CD4-positive, alpha-beta memory T cell (primary cell): ENCODE measurements at regions of chr19 and their contacts with region 1.

Region 1: DNA sequence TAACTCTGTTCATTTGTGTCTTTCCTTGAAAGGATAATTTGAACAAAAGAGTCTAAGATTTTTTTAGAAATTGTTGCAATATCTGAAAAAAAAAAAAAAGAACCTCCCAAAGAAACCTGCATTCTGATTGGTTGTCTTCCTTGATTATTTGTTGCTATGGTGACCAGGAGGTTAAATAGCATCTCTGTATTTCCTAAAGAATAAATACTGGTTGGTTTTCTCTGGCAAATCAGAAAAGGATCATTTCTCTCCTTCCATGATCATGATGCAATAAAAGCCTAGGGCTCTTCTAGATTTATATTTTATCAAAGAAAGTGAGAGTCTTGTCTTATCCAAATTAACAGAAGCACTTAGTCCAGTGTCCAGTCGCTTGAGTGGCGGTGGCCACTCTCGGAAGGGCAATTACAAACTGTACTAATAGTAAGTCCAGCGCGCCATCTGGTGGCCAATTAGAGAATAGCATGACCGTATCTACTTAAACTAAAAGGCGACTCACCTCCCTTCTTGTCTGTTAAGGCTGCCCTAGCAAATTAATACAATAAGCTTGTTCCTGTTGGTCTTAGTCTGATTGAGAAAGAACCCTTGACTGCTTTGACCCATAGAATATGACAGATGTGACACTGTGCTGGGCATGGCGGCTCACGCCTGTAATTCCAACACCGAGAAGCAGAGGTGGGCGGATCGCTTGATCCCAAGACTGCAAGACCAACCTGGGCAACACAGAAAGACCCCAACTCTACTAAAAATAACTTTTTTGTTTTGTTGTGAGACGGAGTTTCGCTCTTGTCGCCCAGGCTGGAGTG is 47.0 kb upstream of the PNMA8B start:
- DNase-seq: peak; percentile 62 to 81 (median 66)
- H3K4me3 ChIP-seq: no peak overlapping the region
- H3K4me3 Mint-ChIP-seq: no peak overlapping the region
- H3K27ac ChIP-seq: no peak overlapping the region
- H3K27ac Mint-ChIP-seq: peak overlapping the region in 1 of 7 donors; percentile 16
- H3K4me1 ChIP-seq: peaks cover 3% of the 10 kb centered on the region
- H3K4me1 Mint-ChIP-seq: peaks cover 1 to 6% (median 5%) of the 10 kb centered on the region in 4 donors
- H3K27me3 ChIP-seq: no peaks in the 10 kb centered on the region
- H3K27me3 Mint-ChIP-seq: peaks cover 0 to under 1% of the 10 kb centered on the region in 2 donors

Region 2: DNA sequence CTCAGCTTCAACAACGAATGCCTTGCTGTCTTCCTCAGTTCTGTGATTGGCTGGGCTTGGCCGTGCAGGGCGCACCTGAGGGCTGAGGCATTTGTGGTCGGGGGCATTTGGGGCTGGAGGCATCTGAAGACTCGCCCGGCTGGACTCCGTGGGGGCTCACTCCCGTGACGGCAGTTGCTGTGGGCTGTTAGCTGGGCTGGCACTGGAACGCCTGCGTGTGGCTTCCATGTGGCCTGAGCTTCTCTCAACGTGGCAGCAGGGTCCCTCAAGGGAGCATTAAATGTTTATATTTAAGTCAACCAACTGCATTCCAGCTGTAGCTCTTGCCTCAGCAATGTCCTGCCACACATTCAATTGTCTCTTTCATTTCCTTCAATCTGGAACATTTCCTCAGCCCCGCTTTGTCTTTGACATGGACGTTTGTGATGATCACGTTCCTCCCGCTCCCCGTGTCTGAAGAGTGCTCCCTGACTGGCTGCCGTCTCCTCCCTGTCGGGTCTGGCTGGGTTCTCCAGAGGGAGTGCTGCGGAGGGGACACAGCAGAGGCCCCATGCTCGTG is 150.3 kb before region 1 on chr19:
- CTCF ChIA-PET with region 1: interaction called, 3 read pairs
- POLR2A ChIA-PET with region 1: interaction called, 4 read pairs
- intact Hi-C with region 1: loop called (anchors 2 kb)
- DNase-seq: no peak
- H3K4me3 ChIP-seq: no peak overlapping the region
- H3K4me3 Mint-ChIP-seq: no peak overlapping the region
- H3K27ac ChIP-seq: no peak overlapping the region
- H3K27ac Mint-ChIP-seq: peak overlapping the region in 2 of 7 donors; percentile 46 to 64
- H3K4me1 ChIP-seq: no peaks in the 10 kb centered on the region
- H3K4me1 Mint-ChIP-seq: peaks cover 3 to 10% (median 4%) of the 10 kb centered on the region in 4 donors
- H3K27me3 ChIP-seq: no peaks in the 10 kb centered on the region
- H3K27me3 Mint-ChIP-seq: peaks cover 0 to 2% of the 10 kb centered on the region in 2 donors

Region 3: DNA sequence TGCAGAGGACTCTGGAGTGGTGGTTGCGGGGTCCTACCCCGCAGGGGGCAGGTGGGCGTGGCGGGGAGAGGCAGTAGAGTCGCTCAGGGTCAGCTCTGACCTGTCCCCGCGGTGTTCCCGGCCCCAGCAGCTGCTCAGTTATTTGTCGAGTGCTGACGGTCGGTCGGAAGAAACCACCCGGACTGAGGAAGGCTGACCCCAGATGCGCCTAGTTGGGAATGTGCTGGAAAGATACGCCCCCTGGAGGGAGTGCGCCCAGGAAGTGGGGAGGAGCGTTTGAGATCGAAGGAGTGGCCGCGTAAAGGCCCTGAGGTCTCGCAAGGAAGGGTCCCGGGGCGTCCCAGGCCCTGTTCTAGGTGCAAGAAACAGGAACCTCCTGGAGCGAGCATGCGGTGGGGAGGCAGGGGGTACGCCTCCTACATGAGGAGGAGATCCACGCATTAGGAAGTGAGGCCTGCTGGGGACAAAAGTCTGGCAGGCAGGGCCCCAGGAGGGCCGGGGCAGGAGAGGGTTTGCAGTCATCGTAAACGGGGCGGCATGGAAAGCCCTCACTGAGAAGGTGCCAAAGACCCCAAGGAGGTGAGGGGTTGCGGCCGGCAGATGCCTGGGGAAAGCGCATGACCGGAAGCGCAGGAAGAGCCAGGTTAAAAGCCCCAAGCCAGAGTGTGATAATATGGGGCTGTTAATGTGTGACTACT is 138.4 kb before region 1 on chr19:
- CTCF ChIA-PET with region 1: interaction called, 4 read pairs
- POLR2A ChIA-PET with region 1: no interaction called
- intact Hi-C with region 1: loop called (anchors 2 kb)
- DNase-seq: no peak
- H3K4me3 ChIP-seq: no peak overlapping the region
- H3K4me3 Mint-ChIP-seq: peak overlapping the region; percentile 12 to 86 (median 64)
- H3K27ac ChIP-seq: no peak overlapping the region
- H3K27ac Mint-ChIP-seq: no peak overlapping the region
- H3K4me1 ChIP-seq: peaks cover 15% of the 10 kb centered on the region
- H3K4me1 Mint-ChIP-seq: peaks cover 14 to 29% (median 19%) of the 10 kb centered on the region in 4 donors
- H3K27me3 ChIP-seq: peaks cover 32% of the 10 kb centered on the region
- H3K27me3 Mint-ChIP-seq: peaks cover 44 to 59% of the 10 kb centered on the region in 2 donors

Region 4: GRCh38 chr19:46520616-46521015 is 22.0 kb before region 1 on chr19:
- CTCF ChIA-PET with region 1: interaction called, 77 read pairs
- POLR2A ChIA-PET with region 1: interaction called, 4 read pairs
- intact Hi-C with region 1: loop called (anchors 1 kb)
- DNase-seq: no peak
- H3K4me3 ChIP-seq: no peak overlapping the region
- H3K4me3 Mint-ChIP-seq: peak overlapping the region in 1 of 8 donors; percentile 45
- H3K27ac ChIP-seq: no peak overlapping the region
- H3K27ac Mint-ChIP-seq: peak overlapping the region in 3 of 7 donors; percentile 22 to 81 (median 78)
- H3K4me1 ChIP-seq: peaks cover 57% of the 10 kb centered on the region
- H3K4me1 Mint-ChIP-seq: peaks cover 22 to 68% (median 45%) of the 10 kb centered on the region in 4 donors
- H3K27me3 ChIP-seq: no peaks in the 10 kb centered on the region
- H3K27me3 Mint-ChIP-seq: peaks cover 0 to 3% of the 10 kb centered on the region in 2 donors